GM13977 (cell line): ENCODE measurements at regions of chr7 and their contacts with region 1.

Region 1: DNA sequence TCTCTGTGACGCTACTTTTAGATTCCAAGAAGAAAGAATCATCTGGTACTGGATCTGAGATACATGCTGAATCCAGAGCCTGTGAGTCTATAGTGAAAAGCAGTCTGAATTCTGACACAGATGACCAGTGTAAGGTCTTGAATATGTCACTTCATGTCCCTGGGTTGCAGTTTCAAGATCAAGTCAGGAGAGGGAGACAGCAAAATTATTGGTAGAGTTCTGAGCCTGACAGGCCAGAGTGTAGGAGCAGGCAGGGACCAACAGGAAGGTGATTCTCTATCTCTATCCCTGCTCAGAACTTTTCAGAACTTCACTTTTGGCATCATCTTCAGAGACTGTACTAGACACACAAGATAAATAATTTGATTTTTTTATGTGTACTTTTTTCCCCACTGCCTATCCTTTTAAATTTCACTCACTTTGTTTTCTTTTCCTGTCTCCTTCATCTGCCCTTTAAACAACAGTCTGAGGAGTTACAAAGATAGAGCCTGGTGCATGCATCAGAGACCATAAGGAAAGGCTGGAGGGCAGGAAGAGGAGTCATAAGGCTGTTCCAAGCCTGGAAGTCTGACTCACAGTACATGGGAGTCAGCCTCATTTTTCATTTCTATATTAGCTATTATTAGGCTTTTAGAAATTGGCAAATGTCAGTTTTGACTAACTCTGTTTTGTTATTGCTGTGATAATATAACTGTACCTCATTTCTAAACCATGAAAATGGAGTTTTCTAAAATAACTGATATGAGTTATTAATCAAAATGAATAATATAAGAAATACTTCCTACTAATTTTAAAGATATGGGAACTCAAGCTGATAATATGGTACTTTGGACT is 120.2 kb upstream of the TMEM229A start:
- DNase-seq: no peak
- CTCF ChIP-seq: peak; percentile 31

Region 2: GRCh38 chr7:124784879-124785818 is 632.1 kb after region 1 on chr7:
- in situ Hi-C with region 1: loop called (anchors 25 kb)
- DNase-seq: peak; percentile 46
- CTCF ChIP-seq: peak; percentile 73